OCI-LY7 (cell line): ENCODE measurements at regions of chr11 and their contacts with region 1.

Region 1: GRCh38 chr11:17276236-17277023 is at the start of gene NUCB2:
- DNase-seq: peak; percentile 96
- H3K4me3 ChIP-seq: peak within 1 kb of the TSS; percentile 79
- H3K27ac ChIP-seq: peak within 1 kb of the TSS; percentile 58
- H3K4me1 ChIP-seq: peaks cover 17% of the 10 kb centered on the region
- CTCF ChIP-seq: no peak
- total RNA-seq, gene NUCB2: 42.4 and 64.3 TPM in 2 replicates

Region 2: GRCh38 chr11:17026487-17027082 is 249.8 kb before region 1 on chr11:
- CTCF ChIA-PET with region 1: no interaction called
- POLR2A ChIA-PET with region 1: no interaction called
- intact Hi-C with region 1: no loop called
- DNase-seq: no peak
- H3K4me3 ChIP-seq: no peak overlapping the region
- H3K27ac ChIP-seq: no peak overlapping the region
- H3K4me1 ChIP-seq: no peaks in the 10 kb centered on the region
- CTCF ChIP-seq: no peak

Region 3: GRCh38 chr11:17077520-17078401 is 198.7 kb before region 1 on chr11 and contains the start of gene RPS13:
- CTCF ChIA-PET with region 1: no interaction called
- POLR2A ChIA-PET with region 1: interaction called, 6 read pairs
- intact Hi-C with region 1: loop called (anchors 5 kb)
- DNase-seq: peak; percentile 98
- H3K4me3 ChIP-seq: peak within 1 kb of the TSS; percentile 84
- H3K27ac ChIP-seq: peak within 1 kb of the TSS; percentile 69
- H3K4me1 ChIP-seq: peaks cover 24% of the 10 kb centered on the region
- CTCF ChIP-seq: no peak
- total RNA-seq, gene RPS13: 1,576 and 1,911 TPM in 2 replicates

Region 4: GRCh38 chr11:17810746-17811145 is 534.3 kb after region 1 on chr11:
- CTCF ChIA-PET with region 1: no interaction called
- POLR2A ChIA-PET with region 1: no interaction called
- intact Hi-C with region 1: no loop called
- DNase-seq: no peak
- H3K4me3 ChIP-seq: no peak overlapping the region
- H3K27ac ChIP-seq: no peak overlapping the region
- H3K4me1 ChIP-seq: no peaks in the 10 kb centered on the region
- CTCF ChIP-seq: no peak